AG04450 (cell line): ENCODE measurements at regions of chr2 and their contacts with region 1.

Region 1: DNA sequence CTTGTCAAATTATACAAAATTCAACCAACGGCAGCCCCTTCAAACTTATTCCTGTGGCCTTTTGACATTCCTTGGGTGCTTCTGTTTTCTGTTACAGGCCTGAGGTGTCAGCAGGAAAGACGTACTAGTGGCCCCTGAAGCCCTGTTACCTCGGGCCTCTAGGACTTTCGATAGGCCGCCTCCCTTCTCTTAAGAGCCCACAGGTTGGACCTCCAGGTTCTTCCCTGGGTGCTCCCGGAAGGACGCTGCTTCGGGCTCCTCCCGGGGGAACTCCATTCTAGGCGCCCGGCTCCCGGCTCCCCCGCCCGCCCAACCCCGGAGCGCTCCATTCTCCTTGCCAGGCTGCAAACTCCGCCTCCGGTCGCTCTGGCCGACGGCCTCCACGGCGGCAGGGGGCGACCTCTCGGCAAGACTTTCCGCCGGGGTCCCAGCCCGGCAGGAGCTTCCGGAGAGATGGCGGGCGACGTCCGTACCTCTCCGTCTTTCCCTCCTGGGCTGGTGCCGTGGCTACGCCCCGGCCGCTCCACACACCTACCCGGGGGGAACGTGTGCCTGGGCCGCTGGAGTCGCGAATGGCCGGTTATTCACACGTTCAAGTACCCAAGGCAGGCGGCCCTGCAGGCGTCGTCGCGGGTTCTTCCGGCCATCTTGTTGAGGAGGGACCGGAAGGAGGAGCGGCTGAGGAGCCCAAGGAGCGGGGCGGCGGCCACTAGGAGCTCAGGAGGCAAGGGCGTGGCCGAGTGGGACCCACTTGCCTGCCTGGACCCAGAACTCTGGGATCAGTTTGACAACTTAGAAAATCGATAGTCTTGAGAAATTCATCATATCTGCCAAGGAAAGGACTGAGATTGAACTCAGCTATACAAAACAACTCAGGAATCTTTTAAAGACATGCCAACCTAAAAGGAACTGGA is 27.5 kb downstream of the BOLA3 start:
- DNase-seq: peak; percentile 58
- H3K4me3 ChIP-seq: peak overlapping the region; percentile 74
- H3K27ac ChIP-seq: peak overlapping the region; percentile 89
- H3K27me3 ChIP-seq: no peaks in the 10 kb centered on the region
- CTCF ChIP-seq: peak; percentile 55

Region 2: GRCh38 chr2:73886357-73886756 is 233.8 kb before region 1 on chr2:
- CTCF ChIA-PET with region 1: no interaction called
- POLR2A ChIA-PET with region 1: no interaction called
- DNase-seq: no peak
- H3K4me3 ChIP-seq: no peak overlapping the region
- H3K27ac ChIP-seq: no peak overlapping the region
- H3K27me3 ChIP-seq: no peaks in the 10 kb centered on the region
- CTCF ChIP-seq: no peak

Region 3: DNA sequence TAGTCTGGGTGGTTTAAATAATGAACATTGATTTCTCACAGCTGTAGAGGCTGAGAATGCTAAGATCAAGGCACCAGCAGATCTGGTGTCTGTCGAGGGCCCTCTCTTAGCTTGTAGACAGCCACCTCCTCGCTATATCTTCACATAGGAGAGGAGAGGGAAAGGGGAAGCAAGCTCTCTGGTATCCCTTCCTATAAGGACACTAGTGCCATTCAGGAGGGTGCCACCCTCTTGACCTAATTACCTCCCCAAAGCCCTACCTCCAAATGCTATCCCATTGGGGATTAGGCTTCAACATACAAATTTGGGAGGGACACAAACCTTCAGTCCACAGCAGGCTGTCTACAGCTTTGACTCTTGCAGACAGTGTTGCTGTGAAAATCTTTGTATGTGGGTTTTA is 49.2 kb before region 1 on chr2:
- CTCF ChIA-PET with region 1: interaction called, 3 read pairs
- POLR2A ChIA-PET with region 1: interaction called, 14 read pairs
- DNase-seq: no peak
- H3K4me3 ChIP-seq: no peak overlapping the region
- H3K27ac ChIP-seq: no peak overlapping the region
- H3K27me3 ChIP-seq: no peaks in the 10 kb centered on the region
- CTCF ChIP-seq: no peak

Region 4: DNA sequence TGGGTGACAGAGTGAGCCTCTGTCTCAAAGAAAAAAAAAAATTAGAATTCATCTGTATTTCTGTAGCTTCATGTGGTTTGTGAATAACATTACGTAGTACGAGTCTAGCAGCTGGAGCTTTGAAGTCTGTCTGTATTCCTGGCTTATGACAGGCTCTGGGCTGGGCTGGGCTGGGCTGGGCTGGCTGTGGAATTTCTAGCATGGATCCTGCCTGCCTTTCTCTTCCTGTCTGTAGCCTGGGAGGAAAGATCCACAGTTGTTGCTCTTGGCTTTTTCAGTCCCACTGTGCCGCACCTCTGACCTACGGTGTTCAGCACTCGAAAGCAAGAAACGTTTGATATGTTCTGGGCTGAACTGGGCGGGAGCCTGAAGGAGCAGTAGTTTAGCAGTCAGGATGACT is 27.9 kb before region 1 on chr2:
- CTCF ChIA-PET with region 1: no interaction called
- POLR2A ChIA-PET with region 1: interaction called, 21 read pairs
- DNase-seq: no peak
- H3K4me3 ChIP-seq: no peak overlapping the region
- H3K27ac ChIP-seq: no peak overlapping the region
- H3K27me3 ChIP-seq: no peaks in the 10 kb centered on the region
- CTCF ChIP-seq: no peak

Region 5: DNA sequence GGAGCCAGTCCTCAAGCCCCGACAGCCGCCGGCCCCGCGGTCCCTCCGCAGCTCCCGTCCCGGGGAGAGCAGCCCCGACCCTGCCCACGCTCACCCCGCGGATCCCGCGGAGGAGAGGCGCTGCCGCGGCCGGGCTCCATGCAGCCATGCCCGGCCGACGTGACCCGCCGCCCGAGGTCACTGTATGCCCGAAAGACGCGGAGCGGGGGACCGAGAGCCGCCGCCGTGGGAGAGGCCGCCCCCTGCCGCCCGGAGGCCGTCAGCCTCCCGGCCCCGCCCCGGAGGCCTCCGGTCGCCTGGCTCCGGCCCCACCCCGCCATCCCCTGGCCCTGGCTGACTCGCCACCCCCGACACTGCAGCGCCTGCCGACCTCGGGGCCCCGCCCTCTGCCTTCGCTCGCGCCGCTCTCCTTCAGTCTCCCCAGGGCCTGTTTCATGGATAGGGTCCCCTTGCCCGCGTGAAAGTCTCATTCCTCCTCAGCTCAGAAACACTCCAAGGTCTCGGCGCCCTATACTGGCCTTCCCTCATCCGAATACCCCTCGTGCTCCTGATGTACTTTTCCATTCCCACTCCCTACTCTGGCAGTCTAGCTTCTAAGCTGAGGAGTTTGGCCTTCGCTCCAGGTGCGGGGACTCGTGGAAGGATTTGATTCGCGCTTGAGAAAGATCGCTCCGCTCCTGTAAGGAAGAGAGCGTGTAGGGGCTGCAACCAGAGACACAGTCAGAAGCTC is 27.7 kb after region 1 on chr2 and contains the start of gene BOLA3:
- CTCF ChIA-PET with region 1: interaction called, 18 read pairs
- POLR2A ChIA-PET with region 1: interaction called, 12 read pairs
- DNase-seq: no peak
- H3K4me3 ChIP-seq: peak within 1 kb of the TSS; percentile 77
- H3K27ac ChIP-seq: peak within 1 kb of the TSS; percentile 39
- H3K27me3 ChIP-seq: no peaks in the 10 kb centered on the region
- CTCF ChIP-seq: peak; percentile 49
- polyA plus RNA-seq, gene BOLA3: 28.1 and 38.6 TPM in 2 replicates

Region 6: GRCh38 chr2:74186038-74186437 is 65.9 kb after region 1 on chr2:
- CTCF ChIA-PET with region 1: no interaction called
- POLR2A ChIA-PET with region 1: no interaction called
- DNase-seq: no peak
- H3K4me3 ChIP-seq: no peak overlapping the region
- H3K27ac ChIP-seq: no peak overlapping the region
- H3K27me3 ChIP-seq: no peaks in the 10 kb centered on the region
- CTCF ChIP-seq: no peak

Region 7: DNA sequence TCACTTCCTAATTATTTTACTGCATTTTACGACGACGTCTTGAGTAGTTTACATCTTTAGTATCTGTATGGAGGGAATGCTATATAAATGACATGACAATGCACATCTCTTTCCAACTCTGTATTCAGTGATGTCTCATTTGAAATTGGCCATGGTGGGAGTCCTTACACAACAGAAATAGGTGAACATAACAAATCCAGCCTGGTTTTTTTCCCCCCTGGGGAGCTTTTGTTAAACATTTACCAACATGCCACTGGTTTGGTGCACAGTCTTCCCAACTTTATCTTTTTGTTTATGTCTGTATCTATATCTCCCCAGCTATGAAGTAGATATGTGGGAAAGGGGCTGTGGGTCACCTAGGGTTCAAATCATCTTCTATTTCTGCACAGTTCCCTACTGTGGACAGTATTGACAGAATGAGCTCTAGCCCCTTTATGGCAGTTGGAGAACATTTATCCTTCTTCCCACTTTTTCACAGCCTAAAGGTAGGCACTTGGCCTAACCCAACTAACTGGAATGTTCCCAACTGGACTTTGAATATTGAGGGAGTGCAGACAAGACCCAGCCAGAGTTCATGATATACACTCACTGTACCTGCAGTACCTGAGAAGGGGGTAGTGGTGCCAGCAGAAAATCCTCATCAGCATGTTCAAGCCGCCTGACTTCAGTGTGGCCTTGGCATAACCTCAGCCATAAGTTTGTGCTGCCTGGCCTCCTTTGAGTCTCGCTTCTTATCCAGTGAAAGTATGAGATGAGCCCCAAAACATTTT is 327.2 kb after region 1 on chr2:
- CTCF ChIA-PET with region 1: no interaction called
- POLR2A ChIA-PET with region 1: no interaction called
- DNase-seq: no peak
- H3K4me3 ChIP-seq: no peak overlapping the region
- H3K27ac ChIP-seq: no peak overlapping the region
- H3K27me3 ChIP-seq: peaks cover 6% of the 10 kb centered on the region
- CTCF ChIP-seq: no peak